ENCODE measurements at regions of chr19 and their contacts with region 1.

Region 1: GRCh38 chr19:7265963-7266362 is 28.3 kb downstream of the INSR start:
- DNase-seq: no peak
- ATAC-seq: no peak
- H3K4me3 ChIP-seq: no peak overlapping the region
- H3K27ac ChIP-seq: no peak overlapping the region
- H3K4me1 ChIP-seq: no peaks in the 10 kb centered on the region; the same call in 1 of the 2 replicates
- H3K27me3 ChIP-seq: no peaks in the 10 kb centered on the region
- CTCF ChIP-seq: no peak
- EP300 ChIP-seq: no peak
- POLR2A ChIP-seq: no peak
- RAD21 ChIP-seq: no peak

Region 2: GRCh38 chr19:7250951-7251893 is 14.7 kb before region 1 on chr19:
- CTCF ChIA-PET with region 1: interaction called, 7 read pairs
- POLR2A ChIA-PET with region 1: interaction called, 3 read pairs
- RAD21 ChIA-PET with region 1: interaction called, 4 read pairs
- SMC1A ChIA-PET with region 1: interaction called, 11 read pairs
- in situ Hi-C with region 1: no loop called
- intact Hi-C with region 1: no loop called
- DNase-seq: no peak
- ATAC-seq: peak; percentile 63
- H3K4me3 ChIP-seq: no peak overlapping the region
- H3K27ac ChIP-seq: peak overlapping the region; percentile 31; the same call in 1 of the 2 replicates
- H3K4me1 ChIP-seq: peaks cover 8% of the 10 kb centered on the region
- H3K27me3 ChIP-seq: no peaks in the 10 kb centered on the region
- CTCF ChIP-seq: no peak
- EP300 ChIP-seq: no peak
- POLR2A ChIP-seq: no peak
- RAD21 ChIP-seq: no peak

Measured in GM12878 (cell line).